ENCODE measurements at regions of chr9 and their contacts with region 1.

Region 1: DNA sequence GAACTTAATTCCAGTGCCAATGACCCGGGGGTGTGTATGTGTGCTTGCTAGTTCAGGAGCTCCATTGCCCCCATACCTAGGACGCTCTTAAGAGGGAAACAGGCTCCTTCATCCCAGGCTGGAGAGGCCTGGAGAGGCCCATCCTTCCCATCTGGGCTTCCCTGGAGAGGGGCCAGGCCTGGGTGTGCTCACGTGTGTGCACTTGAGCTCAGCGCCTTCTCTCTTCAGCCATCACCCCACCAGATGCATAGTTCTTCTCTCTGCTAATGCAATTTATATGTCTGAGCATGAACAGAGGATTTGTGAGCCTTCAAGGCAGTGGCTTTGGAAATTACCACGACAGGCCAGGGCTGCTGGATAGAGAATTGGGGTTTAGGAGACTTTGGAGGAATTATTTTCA is 48.6 kb upstream of the SHB start:
- DNase-seq: no peak
- ATAC-seq: no peak
- H3K4me3 ChIP-seq: no peak overlapping the region
- H3K27ac ChIP-seq: no peak overlapping the region
- H3K4me1 ChIP-seq: no peaks in the 10 kb centered on the region
- H3K27me3 ChIP-seq: peaks cover 0 to 9% (median 0%) of the 10 kb centered on the region in 9 donors
- CTCF ChIP-seq: no peak
- POLR2A ChIP-seq: no peak

Region 2: DNA sequence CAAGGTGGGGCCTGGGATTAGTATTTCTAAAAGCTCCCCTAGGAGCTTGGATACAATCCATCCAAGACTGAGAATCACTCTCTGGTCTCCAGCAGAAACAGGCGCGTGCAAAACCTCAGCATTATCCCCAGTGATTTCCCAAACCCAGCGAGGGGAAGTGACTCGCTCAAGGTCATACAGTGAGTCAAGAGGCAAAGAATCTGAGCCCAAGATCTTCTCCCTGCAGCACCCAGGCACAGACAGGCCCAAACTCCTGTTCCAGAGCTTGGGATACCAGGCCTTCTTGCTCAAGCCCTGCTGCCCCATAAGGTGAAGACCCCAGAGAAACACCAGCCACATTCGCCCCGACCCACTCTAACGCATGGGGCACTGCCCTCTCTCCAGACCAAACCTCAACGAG is 81.8 kb before region 1 on chr9:
- intact Hi-C with region 1: no loop called
- DNase-seq: peak in 1 of 5 donors; percentile 45
- ATAC-seq: no peak
- H3K4me3 ChIP-seq: no peak overlapping the region
- H3K27ac ChIP-seq: no peak overlapping the region
- H3K4me1 ChIP-seq: peaks cover 4 to 77% (median 54%) of the 10 kb centered on the region in 12 donors
- H3K27me3 ChIP-seq: no peaks in the 10 kb centered on the region
- CTCF ChIP-seq: no peak
- POLR2A ChIP-seq: no peak

Region 3: DNA sequence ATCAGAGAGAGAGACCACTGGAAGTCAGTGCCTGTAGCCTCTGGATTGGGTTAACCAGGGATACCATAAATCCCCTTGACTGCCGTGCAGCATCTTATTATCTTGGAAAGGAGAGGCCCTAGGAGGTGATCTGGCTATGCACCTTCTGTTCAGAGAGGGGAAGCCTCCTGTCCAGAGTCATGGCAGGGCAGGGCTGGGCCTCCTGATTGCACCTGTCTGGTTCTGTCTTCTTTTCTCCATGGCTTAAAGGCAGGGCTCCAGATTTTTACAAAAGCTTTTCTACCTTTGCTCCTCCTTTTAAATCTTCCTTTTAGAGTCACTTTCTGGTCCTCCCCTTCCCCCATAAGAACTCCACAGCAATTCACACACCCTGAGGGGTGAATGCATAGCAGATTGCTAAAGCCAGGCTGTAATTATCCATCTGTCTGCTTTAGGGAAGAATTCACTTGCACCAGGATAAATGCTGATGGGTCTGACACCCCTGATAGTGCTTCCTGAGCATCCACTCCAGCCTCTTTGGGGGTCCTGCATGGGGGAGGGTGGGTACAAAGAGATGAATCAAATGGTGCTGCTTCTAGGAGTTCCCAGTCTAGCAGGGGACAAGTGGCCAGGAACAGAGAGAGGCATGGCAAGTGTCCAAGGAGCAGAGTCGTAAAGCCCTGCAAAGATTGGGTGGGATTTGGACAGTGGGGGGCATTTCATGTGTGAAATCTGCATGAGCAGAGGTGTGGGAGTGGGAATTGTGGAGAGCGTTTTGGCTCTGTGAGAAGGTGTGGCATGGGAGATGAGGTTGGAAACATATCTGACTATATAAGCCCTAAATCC is 133.6 kb after region 1 on chr9:
- intact Hi-C with region 1: loop called in 1 of 10 experiments (anchors 10 kb)
- DNase-seq: no peak
- ATAC-seq: no peak
- H3K4me3 ChIP-seq: no peak overlapping the region
- H3K27ac ChIP-seq: no peak overlapping the region
- H3K4me1 ChIP-seq: no peaks in the 10 kb centered on the region
- H3K27me3 ChIP-seq: no peaks in the 10 kb centered on the region
- CTCF ChIP-seq: no peak
- POLR2A ChIP-seq: no peak